Gastrocnemius medialis (tissue), 4 donors: ENCODE measurements at regions of chr4 and their contacts with region 1.

Region 1: DNA sequence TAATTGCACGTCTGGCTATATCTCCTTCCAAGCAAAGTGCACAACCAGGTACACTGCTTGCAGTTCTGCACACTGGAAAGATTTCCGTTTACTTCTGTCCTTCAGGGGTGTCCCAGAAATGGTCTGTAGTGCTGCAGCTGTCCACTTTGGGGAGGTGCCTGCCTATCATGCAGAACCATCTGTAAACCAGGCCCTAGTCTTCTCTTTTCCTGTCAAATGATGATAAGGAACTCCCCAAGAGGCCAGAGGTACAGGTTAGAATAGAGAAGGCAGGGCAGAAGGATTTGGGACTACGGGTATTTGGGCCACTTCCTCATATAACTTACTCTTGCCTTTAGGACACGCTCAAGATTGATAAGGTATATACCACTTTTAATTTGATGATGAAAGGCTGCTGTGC is 746.9 kb downstream of the FAT4 start:
- DNase-seq: no peak
- ATAC-seq: no peak
- H3K4me3 ChIP-seq: no peak overlapping the region
- H3K27ac ChIP-seq: no peak overlapping the region
- H3K4me1 ChIP-seq: no peaks in the 10 kb centered on the region
- H3K27me3 ChIP-seq: no peaks in the 10 kb centered on the region
- CTCF ChIP-seq: no peak
- POLR2A ChIP-seq: no peak

Region 2: GRCh38 chr4:125501568-125501967 is 560.1 kb before region 1 on chr4:
- in situ Hi-C with region 1: no loop called
- intact Hi-C with region 1: no loop called
- DNase-seq: no peak
- ATAC-seq: no peak
- H3K4me3 ChIP-seq: no peak overlapping the region
- H3K27ac ChIP-seq: no peak overlapping the region
- H3K4me1 ChIP-seq: no peaks in the 10 kb centered on the region
- H3K27me3 ChIP-seq: no peaks in the 10 kb centered on the region
- CTCF ChIP-seq: no peak
- POLR2A ChIP-seq: no peak

Region 3: GRCh38 chr4:126838941-126839679 is 777.5 kb after region 1 on chr4:
- in situ Hi-C with region 1: no loop called
- intact Hi-C with region 1: loop called (anchors 10 kb)
- DNase-seq: no peak
- ATAC-seq: no peak
- H3K4me3 ChIP-seq: no peak overlapping the region
- H3K27ac ChIP-seq: no peak overlapping the region
- H3K4me1 ChIP-seq: no peaks in the 10 kb centered on the region
- H3K27me3 ChIP-seq: no peaks in the 10 kb centered on the region
- CTCF ChIP-seq: no peak
- POLR2A ChIP-seq: no peak